ENCODE measurements at regions of chr22 and their contacts with region 1.

Region 1: DNA sequence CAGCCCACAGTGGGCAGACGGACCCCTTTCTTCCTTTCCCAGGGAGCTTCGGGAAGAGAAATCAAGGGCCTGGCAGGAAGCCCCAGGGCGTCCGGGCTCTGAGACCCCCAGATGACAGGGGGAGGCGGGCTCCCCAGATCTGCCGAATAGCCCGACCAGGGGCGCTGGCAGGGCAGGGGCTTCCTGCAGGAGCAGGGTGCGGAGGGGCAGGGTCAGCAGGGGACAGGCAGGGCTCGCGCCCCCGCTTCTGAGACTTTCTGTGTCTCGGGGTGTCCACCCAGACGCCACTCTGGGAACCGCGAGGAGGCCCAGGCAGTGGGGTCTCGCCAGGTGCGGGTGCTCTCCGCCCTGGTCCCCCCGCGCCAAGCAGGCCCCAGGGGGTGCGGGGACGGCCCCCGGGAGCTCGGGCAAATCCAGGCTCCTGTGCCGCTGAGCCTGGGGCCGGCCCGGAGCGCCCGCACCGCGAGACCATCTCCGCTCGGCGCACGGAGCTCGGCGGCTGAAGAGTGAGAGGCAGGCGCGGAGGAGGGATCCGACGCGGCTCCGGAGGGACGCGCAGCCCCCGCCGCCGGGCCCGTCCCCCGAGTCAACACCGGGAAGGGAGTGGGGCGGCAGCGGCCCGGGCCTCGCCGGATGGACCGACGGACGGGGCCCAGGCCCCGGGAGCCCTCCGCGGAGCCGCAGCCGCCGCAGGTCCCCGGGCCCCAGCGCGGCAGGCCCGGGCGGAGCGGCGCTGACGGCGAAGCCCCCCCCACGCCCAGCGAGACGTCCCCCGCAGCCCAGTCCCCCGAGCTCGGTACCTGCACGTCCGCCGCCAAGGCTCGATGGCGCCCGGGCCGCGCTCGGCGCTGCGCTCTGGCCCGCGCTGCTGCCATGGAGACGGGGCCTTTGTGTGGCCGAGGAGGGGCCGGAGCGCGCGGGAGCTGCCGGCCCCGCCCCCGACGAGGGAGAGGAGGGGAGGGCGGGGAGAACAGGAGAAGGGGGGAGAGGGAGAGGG is at the start of gene PLXNB2:
- DNase-seq: peak in 1 of 2 donors; percentile 90
- H3K4me3 ChIP-seq: peak within 1 kb of the TSS; percentile 71 to 95
- H3K27ac ChIP-seq: peak within 1 kb of the TSS; percentile 86 to 96
- H3K4me1 ChIP-seq: peaks cover 44 to 46% of the 10 kb centered on the region in 2 donors
- H3K27me3 ChIP-seq: no peaks in the 10 kb centered on the region
- CTCF ChIP-seq: no peak
- total RNA-seq, gene PLXNB2: 287 TPM

Region 2: GRCh38 chr22:49936018-49936952 is 370.8 kb before region 1 on chr22:
- intact Hi-C with region 1: loop called (anchors 10 kb)
- DNase-seq: peak; percentile 87 to 97
- H3K4me3 ChIP-seq: peak overlapping the region; percentile 51 to 72
- H3K27ac ChIP-seq: peak overlapping the region; percentile 86 to 98
- H3K4me1 ChIP-seq: peaks cover 15 to 39% of the 10 kb centered on the region in 2 donors
- H3K27me3 ChIP-seq: no peaks in the 10 kb centered on the region
- CTCF ChIP-seq: no peak

Region 3: DNA sequence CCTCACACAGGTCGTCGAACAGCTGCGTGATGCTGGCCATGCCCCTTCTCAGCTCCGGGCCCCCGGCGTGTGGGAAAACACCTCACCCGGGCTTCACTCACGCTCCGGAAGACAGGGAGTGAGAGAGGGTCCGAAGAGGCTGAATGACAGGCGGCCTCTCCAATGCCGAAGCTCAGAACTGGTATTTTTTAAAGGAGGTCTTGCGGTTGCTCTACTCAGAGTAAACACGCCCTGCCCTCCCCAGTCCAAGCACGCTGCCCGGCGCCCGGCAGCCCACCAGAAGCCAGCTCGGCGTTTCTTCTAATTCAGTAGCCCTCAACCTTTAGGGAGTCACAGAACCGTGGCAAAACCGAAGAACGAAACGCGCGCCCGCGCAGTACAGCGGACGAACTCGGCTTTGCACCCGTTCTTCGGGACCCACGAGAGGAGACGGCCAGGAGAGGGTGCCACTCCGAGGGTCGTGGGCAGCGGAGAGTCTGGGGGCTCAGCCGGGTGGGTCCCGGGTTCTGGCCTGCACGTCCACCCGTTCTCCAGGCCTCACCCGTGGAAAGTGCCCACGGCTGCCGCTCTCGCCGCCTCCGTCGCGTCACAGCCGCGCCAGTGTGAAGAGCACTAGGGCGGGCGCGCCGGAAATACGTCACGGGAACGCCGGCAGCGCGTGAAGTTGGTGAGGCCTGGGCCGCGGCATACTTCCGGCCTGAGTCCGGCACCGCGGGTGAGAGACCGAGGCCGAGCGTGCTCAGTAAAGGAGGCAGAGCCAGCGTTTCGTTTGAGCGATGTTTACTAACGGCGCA is 62.4 kb before region 1 on chr22 and contains the start of gene TUBGCP6:
- intact Hi-C with region 1: loop called (anchors 2 kb)
- DNase-seq: peak; percentile 63 to 98
- H3K4me3 ChIP-seq: peak within 1 kb of the TSS; percentile 70 to 91
- H3K27ac ChIP-seq: peak within 1 kb of the TSS; percentile 92 to 95
- H3K4me1 ChIP-seq: peaks cover 14 to 35% of the 10 kb centered on the region in 2 donors
- H3K27me3 ChIP-seq: no peaks in the 10 kb centered on the region
- CTCF ChIP-seq: peak in 1 of 3 experiments; percentile 11
- total RNA-seq, gene TUBGCP6: 58.1 TPM

Region 4: DNA sequence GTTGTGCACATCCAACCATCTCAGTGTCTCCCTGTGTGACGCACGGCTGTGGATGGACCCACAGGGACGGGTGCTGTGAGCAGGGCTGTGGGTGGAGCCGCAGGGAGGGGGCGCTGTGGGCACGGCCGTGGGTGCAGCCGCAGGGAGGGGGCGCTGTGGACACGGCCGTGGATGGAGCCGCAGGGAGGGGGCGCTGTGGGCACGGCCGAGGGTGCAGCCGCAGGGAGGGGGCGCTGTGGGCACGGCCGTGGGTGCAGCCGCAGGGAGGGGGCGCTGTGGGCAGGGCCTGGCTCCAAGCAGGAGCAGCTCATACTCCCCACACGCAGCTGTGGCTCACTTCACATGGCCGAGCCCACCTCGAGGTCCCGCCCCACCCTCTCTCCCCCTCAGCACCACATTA is 30.9 kb before region 1 on chr22:
- intact Hi-C with region 1: loop called (anchors 2 kb)
- DNase-seq: peak in 1 of 2 donors; percentile 74
- H3K4me3 ChIP-seq: no peak overlapping the region
- H3K27ac ChIP-seq: no peak overlapping the region
- H3K4me1 ChIP-seq: peaks cover 5 to 9% of the 10 kb centered on the region in 2 donors
- H3K27me3 ChIP-seq: no peaks in the 10 kb centered on the region
- CTCF ChIP-seq: peak in 2 of 3 experiments; percentile 55 to 64

Region 5: DNA sequence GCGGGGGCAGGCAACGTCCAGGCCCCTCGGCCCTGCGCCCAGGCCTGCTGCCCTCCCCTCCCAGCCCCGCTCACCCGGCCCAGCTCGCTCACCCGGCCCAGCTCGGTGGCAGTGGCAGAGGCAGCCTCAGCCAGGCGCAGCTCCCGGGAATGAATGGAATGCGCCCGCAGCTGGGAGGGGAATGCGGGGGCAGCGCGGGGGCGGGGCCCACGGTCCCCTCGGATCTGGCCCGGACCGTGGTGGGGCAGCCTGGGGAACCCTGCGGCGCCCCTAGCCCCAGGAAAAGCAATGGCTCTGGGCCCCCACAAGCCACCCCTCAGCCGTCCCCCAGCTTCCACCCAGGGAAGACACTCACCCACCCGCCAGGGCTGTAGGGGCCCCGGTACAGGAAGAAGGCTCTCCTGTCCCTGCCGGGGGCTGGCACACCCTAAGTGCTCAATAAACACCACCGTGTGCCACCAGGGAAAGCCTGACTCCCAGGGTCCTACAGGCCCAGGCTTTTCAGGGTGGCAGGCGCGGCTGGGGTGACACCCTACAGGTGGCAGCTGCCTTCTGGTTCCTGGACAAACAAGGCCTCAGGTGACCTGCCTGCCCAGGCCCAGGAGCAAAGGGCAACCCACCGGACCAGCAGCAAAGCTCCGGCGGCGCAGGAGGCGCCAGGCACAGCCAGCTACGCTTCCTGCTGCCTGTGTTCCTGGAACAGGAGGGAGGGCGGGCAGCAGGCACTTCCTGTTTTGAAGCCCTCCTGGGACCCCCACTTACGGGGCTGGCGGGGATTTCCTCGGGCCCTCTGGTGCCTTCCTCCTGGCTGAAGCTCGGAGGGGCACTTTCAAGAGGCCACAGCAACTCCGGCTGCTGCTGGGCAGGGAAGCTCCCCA is 13.4 kb before region 1 on chr22:
- intact Hi-C with region 1: loop called (anchors 1 kb)
- DNase-seq: no peak
- H3K4me3 ChIP-seq: peak overlapping the region; percentile 45 to 57
- H3K27ac ChIP-seq: peak overlapping the region; percentile 77 to 97
- H3K4me1 ChIP-seq: peaks cover 9 to 38% of the 10 kb centered on the region in 2 donors
- H3K27me3 ChIP-seq: no peaks in the 10 kb centered on the region
- CTCF ChIP-seq: no peak

Region 6: DNA sequence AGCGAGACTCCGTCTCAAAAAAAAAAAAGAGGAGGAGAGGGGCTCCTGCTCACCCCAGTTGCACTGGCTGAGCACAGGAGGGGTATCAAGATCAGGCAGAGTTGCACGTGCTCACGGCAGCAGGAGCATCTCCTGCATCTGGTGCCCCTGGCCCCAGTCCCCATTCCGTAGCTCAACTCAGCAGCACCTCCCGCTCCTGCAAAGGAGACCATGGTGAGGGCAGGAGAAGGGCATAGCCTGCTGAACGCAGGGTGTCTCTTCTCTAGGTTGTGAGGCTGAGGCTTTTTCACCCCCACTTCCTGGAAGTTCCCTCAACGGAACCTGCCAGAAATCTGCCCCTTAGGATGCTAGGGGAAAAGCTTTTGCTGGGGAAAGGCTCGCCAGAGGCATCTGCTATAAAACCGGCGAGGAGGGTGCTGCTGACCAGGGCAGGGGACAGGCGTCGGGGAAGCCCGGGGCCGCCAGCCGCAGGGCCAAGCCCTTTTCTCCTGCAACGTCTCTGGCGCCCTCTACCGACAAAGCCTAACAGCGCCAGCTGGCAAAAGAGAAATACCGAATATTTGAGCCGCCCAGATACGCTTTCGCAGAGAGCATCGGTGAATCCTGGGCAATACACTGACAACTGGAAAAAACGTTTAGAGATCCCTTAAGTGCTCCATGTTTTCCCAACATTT is 35.1 kb after region 1 on chr22:
- intact Hi-C with region 1: loop called (anchors 2 kb)
- DNase-seq: peak in 1 of 2 donors; percentile 94
- H3K4me3 ChIP-seq: peak overlapping the region; percentile 81 to 100
- H3K27ac ChIP-seq: no peak overlapping the region
- H3K4me1 ChIP-seq: peaks cover 3 to 4% of the 10 kb centered on the region in 2 donors
- H3K27me3 ChIP-seq: no peaks in the 10 kb centered on the region
- CTCF ChIP-seq: peak; percentile 91 to 98 (median 97)

Region 7: GRCh38 chr22:50474668-50475492 is 167.8 kb after region 1 on chr22 and contains the start of gene SBF1:
- intact Hi-C with region 1: no loop called
- DNase-seq: peak; percentile 62 to 94
- H3K4me3 ChIP-seq: peak within 1 kb of the TSS; percentile 92 to 97
- H3K27ac ChIP-seq: peak within 1 kb of the TSS; percentile 70 to 75
- H3K4me1 ChIP-seq: peaks cover 25 to 42% of the 10 kb centered on the region in 2 donors
- H3K27me3 ChIP-seq: no peaks in the 10 kb centered on the region
- CTCF ChIP-seq: no peak
- total RNA-seq, gene SBF1: 98.8 TPM

Measured in ascending aorta (tissue), 2 donors.